ENCODE measurements at regions of chr2 and their contacts with region 1.

Region 1: DNA sequence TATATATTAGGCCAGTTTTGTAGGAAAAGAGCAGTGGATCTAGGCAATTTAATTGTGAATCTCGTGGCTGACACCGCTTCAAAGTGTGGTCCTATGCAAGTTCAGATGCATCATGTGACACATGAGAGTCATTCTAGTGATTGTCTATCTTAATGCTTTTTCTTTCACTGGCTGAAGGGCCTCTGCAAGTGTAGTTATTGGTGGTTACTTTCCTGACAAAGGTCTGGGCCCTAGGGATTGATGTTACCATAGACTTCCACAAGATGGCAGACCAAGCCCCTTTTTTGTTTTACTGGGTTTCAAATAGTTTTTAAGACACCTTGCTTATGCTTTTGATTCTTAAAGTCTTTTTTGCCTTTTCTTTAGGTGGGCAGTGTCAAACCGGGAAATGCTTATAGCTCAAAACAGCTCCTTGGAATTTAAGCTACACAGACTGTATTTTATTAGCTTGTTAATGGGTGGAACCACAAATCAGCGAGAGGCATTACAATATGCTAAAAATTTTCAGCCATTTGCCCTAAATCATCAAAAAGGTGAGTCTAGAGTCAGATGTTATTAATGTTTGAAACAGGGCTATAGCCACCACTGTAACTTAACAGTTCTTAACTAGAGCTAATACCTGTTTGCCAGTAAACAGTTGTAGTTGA is 25.9 kb downstream of the CD8A start:
- DNase-seq: peak; percentile 35
- H3K4me3 ChIP-seq: no peak overlapping the region
- H3K27ac ChIP-seq: no peak overlapping the region
- H3K4me1 ChIP-seq: no peaks in the 10 kb centered on the region
- H3K27me3 ChIP-seq: no peaks in the 10 kb centered on the region
- CTCF ChIP-seq: peak; percentile 56 to 62

Region 2: DNA sequence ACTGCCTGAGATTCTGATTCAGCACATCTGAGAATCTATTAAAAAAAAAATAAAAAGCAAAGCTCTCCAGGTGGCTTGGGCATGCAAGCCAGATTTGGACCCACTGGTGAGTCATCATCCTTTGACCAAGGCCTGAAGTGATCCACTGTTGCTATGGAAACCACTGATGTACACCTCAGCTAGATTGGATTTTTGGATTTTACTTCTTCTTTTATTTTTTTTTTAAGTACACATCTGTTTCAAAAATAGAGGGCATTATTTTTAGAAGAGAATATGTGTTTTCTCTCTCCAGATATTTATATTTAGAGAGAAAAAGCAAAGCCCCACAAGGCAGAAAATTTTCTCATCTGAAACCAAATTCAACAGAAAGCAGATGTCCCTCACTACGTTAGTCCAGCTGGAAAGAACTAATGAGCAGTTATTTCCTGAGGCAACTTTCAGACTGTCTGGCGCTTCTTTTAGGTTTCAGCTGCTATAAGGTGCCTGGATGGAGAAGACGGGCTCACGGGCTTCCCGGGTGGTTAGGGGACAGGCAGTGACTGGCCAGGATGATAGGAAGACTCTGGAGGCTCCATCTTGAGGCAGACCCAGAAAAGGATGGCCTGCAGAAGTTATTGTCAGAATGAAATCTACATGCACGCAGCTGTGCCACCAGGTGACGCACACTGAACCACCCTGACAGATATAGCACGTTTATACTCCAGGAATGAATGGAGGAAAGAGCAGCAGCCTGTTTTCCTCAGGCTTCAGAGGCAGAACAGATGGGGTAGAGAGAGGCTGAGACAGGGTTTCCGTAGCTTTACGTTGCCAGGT is 515.0 kb before region 1 on chr2:
- CTCF ChIA-PET with region 1: no interaction called
- dilution Hi-C with region 1: no loop called
- in situ Hi-C with region 1: no loop called
- intact Hi-C with region 1: no loop called
- DNase-seq: peak; percentile 79
- H3K4me3 ChIP-seq: no peak overlapping the region
- H3K27ac ChIP-seq: no peak overlapping the region
- H3K4me1 ChIP-seq: no peaks in the 10 kb centered on the region
- H3K27me3 ChIP-seq: peaks cover 4% of the 10 kb centered on the region
- CTCF ChIP-seq: no peak

Region 3: DNA sequence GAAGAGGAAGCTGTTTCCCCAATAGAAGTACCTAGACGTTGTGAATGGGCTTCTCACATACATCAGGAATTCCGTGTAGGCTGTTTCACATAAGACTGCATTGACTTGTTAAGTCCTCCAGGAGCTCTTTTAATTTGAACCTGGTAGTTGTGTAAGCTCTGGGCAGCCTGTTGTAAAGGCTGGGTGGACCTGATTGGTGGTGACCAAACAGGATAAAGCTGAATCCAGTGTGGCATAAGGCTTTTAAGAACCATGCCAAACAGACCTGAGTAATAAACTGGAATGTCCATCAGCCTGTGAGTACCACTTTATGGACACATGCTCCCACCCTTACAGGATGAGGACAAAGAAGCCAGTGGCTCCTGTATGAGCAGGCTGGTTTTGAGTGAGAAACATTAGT is 20.6 kb before region 1 on chr2:
- CTCF ChIA-PET with region 1: no interaction called
- dilution Hi-C with region 1: no loop called
- in situ Hi-C with region 1: no loop called
- intact Hi-C with region 1: no loop called
- DNase-seq: no peak
- H3K4me3 ChIP-seq: no peak overlapping the region
- H3K27ac ChIP-seq: no peak overlapping the region
- H3K4me1 ChIP-seq: peaks cover 8% of the 10 kb centered on the region
- H3K27me3 ChIP-seq: no peaks in the 10 kb centered on the region
- CTCF ChIP-seq: no peak

Region 4: GRCh38 chr2:86778957-86779356 is 14.2 kb after region 1 on chr2:
- CTCF ChIA-PET with region 1: no interaction called
- dilution Hi-C with region 1: no loop called
- in situ Hi-C with region 1: no loop called
- intact Hi-C with region 1: loop called (anchors 1 kb)
- DNase-seq: no peak
- H3K4me3 ChIP-seq: no peak overlapping the region
- H3K27ac ChIP-seq: no peak overlapping the region
- H3K4me1 ChIP-seq: no peaks in the 10 kb centered on the region
- H3K27me3 ChIP-seq: no peaks in the 10 kb centered on the region
- CTCF ChIP-seq: no peak

Region 5: GRCh38 chr2:86808315-86809161 is 43.8 kb after region 1 on chr2:
- CTCF ChIA-PET with region 1: interaction called, 3 read pairs
- dilution Hi-C with region 1: no loop called
- in situ Hi-C with region 1: no loop called
- intact Hi-C with region 1: loop called (anchors 1 kb)
- DNase-seq: peak; percentile 84
- H3K4me3 ChIP-seq: peak overlapping the region; percentile 60 to 63 (median 62)
- H3K27ac ChIP-seq: peak overlapping the region; percentile 11
- H3K4me1 ChIP-seq: peaks cover 16% of the 10 kb centered on the region
- H3K27me3 ChIP-seq: no peaks in the 10 kb centered on the region
- CTCF ChIP-seq: peak; percentile 88 to 93

Measured in mammary epithelial cell (primary cell).